ENCODE measurements at regions of chr1 and their contacts with region 1.

Region 1: DNA sequence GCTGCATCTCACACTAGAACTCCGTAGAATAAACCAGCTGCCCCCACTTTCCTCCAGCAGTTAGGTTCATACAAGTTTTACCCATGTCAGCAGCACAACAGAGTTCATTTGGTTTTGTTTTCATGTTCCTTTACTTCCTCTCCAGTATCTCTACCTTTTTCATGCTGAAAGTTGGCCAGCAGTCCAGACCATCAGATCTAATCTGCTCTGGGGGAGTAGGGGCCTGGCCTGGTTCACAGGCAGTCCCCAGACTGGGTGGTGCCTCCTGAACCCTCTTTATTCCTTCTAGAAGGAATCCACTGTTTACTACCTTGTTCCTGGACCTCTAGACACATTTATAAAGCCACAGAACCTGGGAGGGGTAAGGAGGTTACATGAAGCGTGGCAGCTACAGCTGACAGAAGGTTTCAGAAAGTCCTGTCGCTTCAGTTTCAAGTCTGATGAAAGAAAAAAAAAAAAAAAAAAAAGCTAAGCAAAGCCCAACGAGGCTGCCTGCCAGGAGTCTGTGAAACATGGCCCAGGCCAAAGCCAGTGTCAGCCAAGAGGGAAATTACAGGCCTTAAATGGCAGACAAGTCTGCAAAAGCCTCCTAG is 184.6 kb upstream of the JUN start:
- DNase-seq: peak; percentile 85 to 93
- ATAC-seq: peak; percentile 36 to 61 (median 54)
- H3K4me3 ChIP-seq: peak overlapping the region; percentile 23
- H3K27ac ChIP-seq: peak overlapping the region; percentile 97
- H3K4me1 ChIP-seq: peaks cover 57% of the 10 kb centered on the region
- H3K27me3 ChIP-seq: no peaks in the 10 kb centered on the region
- CTCF ChIP-seq: peak; percentile 12

Region 2: GRCh38 chr1:58911841-58912553 is 56.5 kb before region 1 on chr1:
- intact Hi-C with region 1: loop called (anchors 2 to 5 kb)
- DNase-seq: no peak
- ATAC-seq: no peak
- H3K4me3 ChIP-seq: no peak overlapping the region
- H3K27ac ChIP-seq: no peak overlapping the region
- H3K4me1 ChIP-seq: peaks cover 18% of the 10 kb centered on the region
- H3K27me3 ChIP-seq: no peaks in the 10 kb centered on the region
- CTCF ChIP-seq: no peak

Region 3: GRCh38 chr1:59015708-59016107 is 47.3 kb after region 1 on chr1:
- intact Hi-C with region 1: loop called in 1 of 2 experiments (anchors 5 kb)
- DNase-seq: no peak
- ATAC-seq: peak in 1 of 4 donors; percentile 30
- H3K4me3 ChIP-seq: no peak overlapping the region
- H3K27ac ChIP-seq: no peak overlapping the region
- H3K4me1 ChIP-seq: peaks cover 43% of the 10 kb centered on the region
- H3K27me3 ChIP-seq: no peaks in the 10 kb centered on the region
- CTCF ChIP-seq: no peak

Region 4: DNA sequence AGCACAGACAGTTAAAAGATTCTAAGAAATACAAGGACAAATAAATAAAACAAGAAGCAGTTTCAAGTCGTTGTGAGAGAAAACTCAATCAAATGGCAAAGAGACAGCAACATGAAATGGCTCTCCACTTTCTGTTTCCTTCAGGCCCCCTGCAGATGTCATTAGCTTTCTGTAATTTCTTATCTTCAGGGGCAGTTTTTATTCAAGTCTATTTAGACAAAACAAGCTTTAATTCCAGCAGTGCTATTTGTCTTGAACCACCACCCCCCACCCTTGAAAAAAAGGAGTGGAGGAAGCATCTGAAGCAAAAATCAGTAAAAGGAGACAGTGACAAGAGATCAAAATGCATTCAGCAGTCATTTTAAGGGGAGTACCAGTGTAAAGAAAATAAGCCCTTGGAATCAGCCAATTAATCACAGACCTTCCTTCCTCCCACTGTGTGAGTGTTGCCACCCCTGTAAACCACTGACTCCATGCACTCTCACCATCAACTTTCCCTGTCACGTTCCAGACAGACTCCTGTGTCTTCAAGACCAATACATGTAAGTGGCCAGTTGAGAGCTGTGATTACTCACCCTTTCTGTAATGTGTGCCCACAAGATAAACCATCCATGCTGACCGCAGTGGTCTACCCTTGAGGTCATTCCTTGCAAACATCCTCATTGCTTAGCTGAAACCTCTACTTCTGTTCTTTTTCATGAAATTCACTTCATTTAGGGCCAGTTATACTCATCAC is 710.2 kb after region 1 on chr1:
- intact Hi-C with region 1: loop called in 1 of 2 experiments (anchors 10 kb)
- DNase-seq: no peak
- ATAC-seq: no peak
- H3K4me3 ChIP-seq: no peak overlapping the region
- H3K27ac ChIP-seq: peak overlapping the region; percentile 32
- H3K4me1 ChIP-seq: peaks cover 64% of the 10 kb centered on the region
- H3K27me3 ChIP-seq: no peaks in the 10 kb centered on the region
- CTCF ChIP-seq: no peak

Measured in psoas muscle (tissue), 8 donors.